ENCODE measurements at regions of chr11 and their contacts with region 1.

Region 1: GRCh38 chr11:14687943-14688627 is 44.5 kb downstream of the PDE3B start:
- DNase-seq: no peak
- H3K4me3 Mint-ChIP-seq: no peak overlapping the region
- H3K27ac Mint-ChIP-seq: no peak overlapping the region
- H3K4me1 Mint-ChIP-seq: peaks cover 55% of the 10 kb centered on the region
- H3K27me3 Mint-ChIP-seq: no peaks in the 10 kb centered on the region

Region 2: DNA sequence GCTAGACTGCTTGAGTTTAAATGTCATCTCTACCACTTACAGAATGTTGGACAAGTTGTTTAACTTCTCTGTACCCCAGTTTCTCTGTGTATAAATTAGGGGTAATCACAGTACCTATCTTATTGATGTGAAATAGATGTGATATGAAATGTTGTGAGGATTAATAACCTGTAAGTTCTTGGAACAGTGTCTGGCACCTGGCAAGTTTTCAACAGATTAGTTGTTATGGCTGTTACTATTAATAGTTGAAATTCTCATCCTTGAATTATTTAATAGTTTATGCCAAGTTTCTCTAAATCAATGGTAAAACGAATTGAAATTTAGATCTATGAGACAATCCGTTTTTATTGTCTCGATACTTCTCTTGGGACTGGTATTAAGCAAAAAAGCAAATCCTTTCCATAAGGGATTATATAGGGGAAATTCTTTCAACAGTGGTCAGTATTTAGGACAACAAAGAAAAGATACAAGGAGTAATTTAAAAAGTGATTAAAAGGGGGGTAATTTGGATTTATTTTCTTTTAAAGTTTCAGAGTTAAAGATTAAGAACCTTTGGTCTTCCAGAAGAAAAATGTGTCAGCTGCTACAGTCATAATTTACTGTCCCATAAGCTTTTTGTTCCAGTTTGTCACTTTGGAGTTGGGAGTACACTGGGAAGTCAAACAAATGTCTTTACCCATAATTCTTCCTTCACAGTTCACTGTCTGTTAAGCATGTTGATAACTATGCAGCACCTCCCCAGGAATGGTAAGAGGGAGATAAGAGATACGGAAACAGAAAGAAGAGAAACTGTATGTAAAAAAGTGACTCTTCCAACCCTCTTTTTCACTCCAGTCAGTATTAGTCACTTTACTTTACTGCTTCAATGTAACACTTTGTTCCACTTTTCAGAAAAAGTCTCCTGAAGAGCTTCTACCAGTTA is 31.3 kb before region 1 on chr11:
- intact Hi-C with region 1: loop called (anchors 5 kb)
- DNase-seq: no peak
- H3K4me3 Mint-ChIP-seq: no peak overlapping the region
- H3K27ac Mint-ChIP-seq: peak overlapping the region; percentile 8
- H3K4me1 Mint-ChIP-seq: peaks cover 53% of the 10 kb centered on the region
- H3K27me3 Mint-ChIP-seq: no peaks in the 10 kb centered on the region

Region 3: DNA sequence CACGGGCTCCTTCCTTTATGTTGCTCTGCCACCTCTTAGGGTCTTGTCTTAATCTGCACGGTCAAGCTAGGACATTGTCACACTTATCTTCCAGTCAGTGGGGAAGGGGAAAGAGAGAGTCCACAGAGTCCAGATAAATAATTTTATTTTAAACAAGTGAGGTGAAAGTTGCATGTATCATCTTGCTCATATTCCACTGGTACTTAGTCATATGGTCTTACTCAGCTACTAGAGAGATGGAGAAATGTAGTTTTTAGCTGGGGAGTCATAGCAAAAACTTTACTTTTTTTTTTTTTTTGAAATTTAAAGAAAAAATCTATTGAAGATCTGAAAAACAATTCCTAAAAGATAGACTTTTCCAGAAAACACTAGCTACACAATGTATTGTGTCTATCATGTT is 15.4 kb before region 1 on chr11:
- intact Hi-C with region 1: loop called (anchors 2 kb)
- DNase-seq: no peak
- H3K4me3 Mint-ChIP-seq: no peak overlapping the region
- H3K27ac Mint-ChIP-seq: peak overlapping the region; percentile 77
- H3K4me1 Mint-ChIP-seq: peaks cover 63% of the 10 kb centered on the region
- H3K27me3 Mint-ChIP-seq: no peaks in the 10 kb centered on the region

Region 4: DNA sequence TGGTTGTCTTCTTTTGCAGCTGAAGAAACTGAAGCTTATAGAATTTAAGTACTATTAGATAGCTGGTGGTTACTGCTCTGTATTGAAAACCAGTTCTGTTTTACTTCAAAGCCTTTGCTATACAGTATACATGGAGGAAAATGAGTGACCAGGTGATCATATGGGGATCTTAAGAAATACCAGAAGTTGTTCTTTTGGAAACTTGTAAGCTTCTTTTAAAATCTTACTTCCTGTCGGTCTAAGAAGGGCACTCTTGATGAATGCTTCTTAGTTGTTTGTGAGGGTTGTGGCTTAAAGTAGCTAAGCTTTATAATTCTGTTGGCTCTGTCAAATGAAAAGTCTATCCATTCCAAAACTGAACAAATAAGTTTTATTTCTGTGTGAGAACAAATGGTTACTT is 10.7 kb after region 1 on chr11:
- intact Hi-C with region 1: loop called (anchors 2 kb)
- DNase-seq: no peak
- H3K4me3 Mint-ChIP-seq: no peak overlapping the region
- H3K27ac Mint-ChIP-seq: no peak overlapping the region
- H3K4me1 Mint-ChIP-seq: peaks cover 38% of the 10 kb centered on the region
- H3K27me3 Mint-ChIP-seq: no peaks in the 10 kb centered on the region

Measured in activated T-helper 1 cell treated with anti-CD3 and anti-CD28 coated beads, Interleukin-12 subunit alpha, Interleukin-12 subunit beta, Interleukin-2, Interleukin-4 antibody, amounts not matched to agents 30 ng/mL and 10 ng/mL and 1 ng/mL, durations not matched to agents 14 hours and 24 hours and 36 hours (primary cell).